AG04449 (cell line): ENCODE measurements at regions of chr6 and their contacts with region 1.

Region 1: DNA sequence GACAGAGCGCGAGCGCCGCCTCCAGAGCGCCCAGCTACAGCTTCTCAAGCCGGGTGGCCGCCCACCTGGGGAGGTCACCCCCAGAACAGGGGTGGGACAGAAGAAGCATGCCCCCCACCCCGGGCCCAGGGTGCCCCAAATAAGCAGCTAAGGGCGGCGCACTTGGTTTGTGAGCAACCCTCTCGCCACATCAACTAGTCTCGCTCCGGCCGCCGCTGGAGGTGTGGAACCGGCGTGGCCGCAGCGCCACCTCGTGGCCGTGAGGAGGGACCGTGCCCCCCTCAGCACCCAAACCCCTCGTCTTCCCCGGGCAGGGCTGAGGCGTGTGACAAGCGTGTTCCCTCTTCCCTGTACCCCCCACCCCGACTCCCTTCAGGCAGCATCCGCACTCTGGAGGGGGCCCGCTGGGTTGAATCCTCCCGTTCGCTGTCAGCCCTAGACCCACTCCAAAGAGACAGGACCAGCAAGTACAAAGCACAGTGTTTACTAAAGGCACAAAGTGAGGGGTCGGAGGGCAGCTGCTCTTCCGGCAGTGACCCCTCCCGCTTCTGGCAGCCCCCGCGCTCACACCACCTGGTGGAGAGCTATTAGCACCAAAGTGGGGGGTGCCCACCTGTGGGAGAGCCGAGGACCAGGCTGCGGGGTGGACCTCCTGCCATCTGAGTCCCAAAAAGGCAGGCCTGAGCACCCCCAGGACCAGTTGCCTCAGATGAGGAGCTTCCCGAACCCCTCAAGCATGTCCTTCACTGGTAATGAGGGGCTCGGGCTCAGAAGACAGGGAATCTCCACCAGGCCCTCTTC is 45.4 kb downstream of the MDFI start:
- DNase-seq: no peak
- H3K4me3 ChIP-seq: peak overlapping the region; percentile 38
- CTCF ChIP-seq: peak; percentile 97

Region 2: GRCh38 chr6:41424370-41425058 is 259.2 kb before region 1 on chr6:
- CTCF ChIA-PET with region 1: interaction called, 56 read pairs
- POLR2A ChIA-PET with region 1: no interaction called
- DNase-seq: peak; percentile 19
- H3K4me3 ChIP-seq: no peak overlapping the region
- CTCF ChIP-seq: peak; percentile 85

Region 3: DNA sequence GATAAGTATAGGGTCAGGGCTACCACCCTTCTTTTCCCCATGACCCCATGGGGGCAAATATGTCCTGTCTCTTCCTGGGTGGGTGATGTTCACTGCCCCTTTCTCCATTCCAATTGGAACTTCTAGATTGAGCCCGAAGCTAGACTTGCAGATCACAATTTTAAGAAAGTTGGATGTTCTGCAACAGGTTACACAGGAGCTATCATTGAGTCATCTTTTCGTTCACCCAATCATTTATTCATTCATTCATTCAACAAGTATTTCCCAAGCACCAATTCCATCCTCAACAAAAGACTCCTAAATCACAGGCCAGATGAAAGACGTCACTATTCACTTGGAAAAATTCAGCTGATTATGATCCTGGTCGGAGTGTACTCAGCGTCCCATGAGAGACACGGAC is 208.5 kb before region 1 on chr6:
- CTCF ChIA-PET with region 1: no interaction called
- POLR2A ChIA-PET with region 1: no interaction called
- DNase-seq: no peak
- H3K4me3 ChIP-seq: no peak overlapping the region
- CTCF ChIP-seq: no peak

Region 4: DNA sequence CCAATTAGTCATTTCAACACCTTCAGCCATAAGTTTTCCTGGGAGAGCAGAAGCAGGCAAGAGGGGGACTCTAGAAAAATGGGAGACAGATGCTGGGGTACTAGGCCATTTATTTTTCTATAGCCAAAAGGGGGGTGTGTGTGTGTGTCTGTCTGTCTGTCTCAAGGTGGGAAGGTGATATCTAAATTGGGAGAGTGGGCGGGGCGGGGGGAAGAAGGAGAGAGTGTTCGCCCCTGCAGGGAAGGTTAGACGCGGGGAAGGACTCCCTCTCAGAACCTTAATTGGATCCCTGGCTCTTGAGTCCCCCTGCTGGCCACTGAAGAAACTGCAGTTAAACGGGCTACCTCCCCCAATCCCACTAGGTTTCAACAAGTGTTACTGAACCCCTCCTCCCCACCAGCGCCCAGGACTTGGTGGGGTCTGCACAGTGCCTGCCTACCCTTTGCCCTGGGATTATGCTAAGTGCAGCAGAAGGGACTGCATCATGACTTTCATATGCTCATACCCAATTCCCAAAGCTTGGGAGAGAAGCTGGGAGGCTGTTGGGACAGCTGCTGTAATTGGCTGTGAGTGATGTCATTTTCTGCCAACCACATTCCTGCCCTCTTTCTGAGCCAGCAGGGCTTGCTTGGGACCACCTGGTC is 91.7 kb before region 1 on chr6:
- CTCF ChIA-PET with region 1: interaction called, 90 read pairs
- POLR2A ChIA-PET with region 1: no interaction called
- DNase-seq: no peak
- H3K4me3 ChIP-seq: no peak overlapping the region
- CTCF ChIP-seq: peak; percentile 86

Region 5: DNA sequence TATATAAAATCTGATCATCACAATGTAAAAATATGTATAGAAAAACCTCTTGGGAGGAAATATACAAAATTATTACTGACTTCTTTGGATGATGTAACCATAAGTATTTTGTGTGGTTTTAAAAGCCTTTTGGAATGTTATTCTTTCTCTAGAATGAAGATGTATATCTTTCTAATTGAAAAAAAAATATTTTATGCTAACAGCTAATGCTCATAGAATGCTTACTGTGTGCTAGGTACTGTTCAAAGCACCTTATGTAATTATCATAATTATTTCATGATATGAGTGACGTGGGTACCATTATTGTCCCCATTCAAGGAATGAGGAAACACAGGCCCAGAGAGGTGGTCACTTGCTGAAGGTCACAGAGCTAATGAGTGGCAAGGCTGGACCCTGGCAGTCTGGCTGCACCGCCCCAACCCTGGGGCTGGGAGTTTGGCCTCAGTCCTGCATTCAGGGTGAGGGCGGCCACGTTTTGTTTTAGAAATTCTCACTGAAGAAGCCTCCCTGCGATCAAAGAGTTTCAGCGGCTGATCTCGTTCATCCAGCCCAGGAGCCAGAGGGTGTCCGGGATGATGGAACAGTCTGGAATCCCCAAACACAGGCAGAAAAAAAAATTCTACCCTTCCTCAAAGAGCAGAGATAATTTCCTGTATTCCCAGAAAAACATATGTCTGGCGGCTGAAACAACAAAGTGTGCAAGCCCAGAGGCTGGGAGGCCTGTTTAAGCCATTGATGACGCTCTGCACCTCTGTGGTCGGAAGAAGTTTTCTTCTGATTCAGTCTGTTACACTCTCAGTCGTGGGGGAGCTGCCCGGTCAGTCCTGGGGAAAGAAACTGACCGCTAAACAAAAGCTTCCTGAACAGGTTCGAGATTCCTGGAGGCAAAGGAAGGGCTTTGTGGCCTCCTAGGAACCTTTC is 14.4 kb after region 1 on chr6:
- CTCF ChIA-PET with region 1: interaction called, 109 read pairs
- POLR2A ChIA-PET with region 1: interaction called, 3 read pairs
- DNase-seq: peak; percentile 95
- H3K4me3 ChIP-seq: peak overlapping the region; percentile 13
- CTCF ChIP-seq: no peak

Region 6: DNA sequence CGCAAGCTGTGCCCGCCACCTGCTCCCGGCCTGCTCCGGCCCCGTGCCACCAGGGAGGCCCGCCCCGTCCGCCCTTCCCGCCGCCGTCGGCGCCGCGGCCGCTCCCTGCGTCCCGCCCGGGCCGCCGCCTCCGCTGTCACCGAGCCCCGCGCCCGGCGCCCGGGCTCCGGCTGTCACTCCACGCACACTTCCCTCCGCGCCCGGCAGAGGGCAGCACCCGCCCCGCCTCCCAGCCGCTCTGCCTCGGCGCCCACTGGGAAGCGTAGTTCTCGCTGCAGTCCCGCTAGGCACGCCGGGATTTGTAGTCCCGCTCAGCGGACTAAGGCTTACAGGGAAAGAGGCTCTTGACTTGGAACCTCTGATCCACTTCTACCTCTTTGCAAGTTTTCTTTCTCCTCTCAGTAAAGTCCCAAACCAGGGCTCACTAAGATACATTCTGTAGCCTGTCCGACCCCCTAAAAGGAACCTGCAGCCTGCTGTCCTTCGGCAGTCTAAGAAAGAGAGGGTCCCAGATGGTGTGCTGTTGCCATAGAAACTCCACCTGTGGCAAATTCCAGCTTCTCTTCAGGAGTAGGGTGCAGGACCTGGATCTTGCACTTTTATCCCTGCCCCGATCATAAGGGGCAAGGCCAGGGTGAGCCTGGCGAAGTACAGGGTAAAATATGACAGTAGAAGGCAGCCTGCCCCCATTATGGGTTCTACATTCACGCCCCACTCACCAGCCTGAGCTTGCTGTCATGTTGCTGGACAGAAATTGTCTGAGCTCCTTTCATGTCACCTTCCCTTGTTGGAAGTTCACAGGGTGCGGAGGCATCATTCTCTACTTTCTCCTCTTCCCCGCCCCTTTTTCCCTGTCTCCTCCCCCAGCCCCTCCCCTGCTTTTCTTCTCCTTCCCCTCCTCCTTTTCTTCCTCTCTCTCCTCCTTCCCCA is 52.0 kb after region 1 on chr6 and contains the start of gene TFEB:
- CTCF ChIA-PET with region 1: interaction called, 33 read pairs
- POLR2A ChIA-PET with region 1: no interaction called
- DNase-seq: peak; percentile 41
- H3K4me3 ChIP-seq: peak within 1 kb of the TSS; percentile 73
- CTCF ChIP-seq: peak; percentile 93

Region 7: DNA sequence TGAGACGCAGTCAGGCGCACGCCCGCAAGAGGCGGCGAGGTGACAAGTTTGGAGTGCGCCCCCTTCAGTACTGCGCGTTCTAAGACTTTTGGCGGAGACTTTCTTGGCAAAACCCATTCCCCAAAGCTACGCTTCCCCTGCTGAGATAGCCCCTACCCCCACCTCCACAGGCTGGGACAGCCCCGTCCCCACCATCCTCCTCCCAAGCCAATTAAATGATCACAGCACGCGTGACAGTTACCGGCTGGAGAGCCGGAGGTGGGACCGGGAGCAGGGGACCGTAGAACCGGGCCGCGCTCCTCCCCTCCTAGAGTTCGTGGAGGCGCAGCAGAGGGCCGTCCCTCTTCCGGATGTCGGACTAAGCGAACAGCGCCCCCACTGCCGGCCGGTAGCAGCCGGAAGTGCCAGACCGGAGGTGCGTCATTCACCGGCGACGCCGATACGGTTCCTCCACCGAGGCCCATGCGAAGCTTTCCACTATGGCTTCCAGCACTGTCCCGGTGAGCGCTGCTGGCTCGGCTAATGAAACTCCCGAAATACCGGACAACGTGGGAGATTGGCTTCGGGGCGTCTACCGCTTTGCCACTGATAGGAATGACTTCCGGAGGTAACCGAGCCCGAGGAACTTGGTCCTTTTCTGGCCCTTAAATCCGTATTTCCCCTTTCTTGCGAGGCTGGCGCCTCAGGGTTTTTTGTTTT is 103.7 kb after region 1 on chr6 and contains the start of gene TOMM6:
- CTCF ChIA-PET with region 1: interaction called, 48 read pairs
- POLR2A ChIA-PET with region 1: no interaction called
- DNase-seq: peak; percentile 47
- H3K4me3 ChIP-seq: peak within 1 kb of the TSS; percentile 99
- CTCF ChIP-seq: peak; percentile 94